Activated CD8-positive, alpha-beta T cell treated with anti-CD3 and anti-CD28 coated beads, Interleukin-2, amount 10 ng/mL, durations not matched to agents 7 days and 5 days (primary cell): ENCODE measurements at regions of chr20 and their contacts with region 1.

Region 1: DNA sequence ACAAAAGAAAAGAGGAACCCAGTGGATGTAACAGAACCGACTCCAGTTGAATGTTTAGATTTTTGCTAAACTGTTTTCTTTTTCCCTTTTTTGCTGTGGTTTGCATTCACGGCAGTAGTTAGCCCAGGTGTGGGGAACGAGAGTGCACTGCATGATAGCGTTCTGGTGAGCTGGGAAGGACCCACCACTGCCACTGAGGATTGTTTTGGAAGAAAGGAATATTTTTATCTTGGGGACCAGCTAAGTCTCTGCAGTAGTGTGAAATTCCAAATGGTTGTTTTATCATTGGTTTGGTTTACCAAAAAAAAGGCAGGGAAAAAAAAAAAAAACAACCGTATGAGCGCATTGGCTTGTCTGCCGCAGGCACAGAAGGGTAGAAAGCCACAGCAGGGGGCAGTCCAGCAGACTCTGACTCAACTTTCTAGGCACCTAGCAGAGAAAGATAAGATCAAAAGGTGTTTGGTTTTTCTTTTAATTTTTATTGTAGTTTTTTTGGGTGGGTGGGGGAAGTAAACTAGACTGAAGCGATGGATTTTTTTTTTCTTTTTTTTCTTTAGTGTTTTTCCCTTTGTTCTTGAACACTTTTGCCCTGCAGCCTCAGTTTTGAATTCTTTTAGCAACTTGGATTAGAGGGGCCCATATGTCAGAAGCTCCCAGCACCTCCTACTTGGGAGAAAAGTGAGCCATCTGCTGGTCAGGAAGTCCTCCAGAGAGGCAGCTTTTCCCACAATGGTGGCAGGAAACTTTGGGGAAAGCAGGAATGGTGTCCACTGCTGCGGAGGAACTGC is 13.5 kb upstream of the RAB5IF start:
- DNase-seq: peak; percentile 74
- ATAC-seq: peak; percentile 69
- H3K4me3 Mint-ChIP-seq: peak overlapping the region; percentile 16
- H3K27ac Mint-ChIP-seq: peak overlapping the region; percentile 87
- H3K4me1 Mint-ChIP-seq: peaks cover 58% of the 10 kb centered on the region
- H3K27me3 Mint-ChIP-seq: no peaks in the 10 kb centered on the region

Region 2: GRCh38 chr20:36527331-36528125 is 64.5 kb before region 1 on chr20:
- CTCF ChIA-PET with region 1: no interaction called
- POLR2A ChIA-PET with region 1: no interaction called
- DNase-seq: no peak
- ATAC-seq: no peak
- H3K4me3 Mint-ChIP-seq: no peak overlapping the region
- H3K27ac Mint-ChIP-seq: no peak overlapping the region
- H3K4me1 Mint-ChIP-seq: no peaks in the 10 kb centered on the region
- H3K27me3 Mint-ChIP-seq: no peaks in the 10 kb centered on the region

Region 3: DNA sequence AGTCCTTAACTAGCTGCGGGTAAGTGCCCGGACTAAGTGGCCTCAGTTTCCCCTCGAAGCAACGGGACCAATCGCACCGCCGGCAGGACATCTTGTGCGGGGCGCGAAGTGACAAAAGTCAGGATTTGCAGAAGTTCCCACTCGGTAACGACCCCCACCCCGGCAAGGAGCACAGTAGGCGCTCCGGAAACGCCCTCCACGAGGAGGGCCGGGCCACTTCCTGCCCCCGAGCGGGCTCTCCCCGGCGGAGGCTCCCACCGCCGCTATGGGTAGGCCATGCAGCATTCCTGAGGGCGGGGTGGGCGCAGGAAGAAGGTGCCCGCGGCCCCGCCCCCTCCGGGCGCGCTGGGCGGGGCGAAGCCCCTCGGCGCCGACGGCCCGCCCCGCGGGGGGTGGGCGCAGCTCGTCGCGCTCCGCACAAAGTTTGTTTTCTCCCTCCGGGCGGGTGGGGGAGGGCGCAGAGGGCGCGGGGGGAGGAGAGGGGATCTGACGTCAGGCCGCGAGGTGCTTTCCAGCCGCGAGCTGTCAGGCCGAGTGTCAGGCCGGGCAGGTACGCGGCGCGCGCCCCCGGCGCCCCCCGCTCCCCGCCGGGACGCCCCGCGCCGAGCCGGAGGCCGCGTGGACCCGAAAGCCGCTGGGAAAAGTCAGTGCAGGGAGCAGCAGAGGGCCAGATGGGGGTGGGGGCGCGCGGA is 18.8 kb before region 1 on chr20 and contains the start of gene TGIF2:
- CTCF ChIA-PET with region 1: interaction called, 10 read pairs
- POLR2A ChIA-PET with region 1: interaction called, 60 read pairs
- DNase-seq: peak; percentile 93
- ATAC-seq: peak; percentile 76
- H3K4me3 Mint-ChIP-seq: peak within 1 kb of the TSS; percentile 87
- H3K27ac Mint-ChIP-seq: peak within 1 kb of the TSS; percentile 98
- H3K4me1 Mint-ChIP-seq: peaks cover 40% of the 10 kb centered on the region
- H3K27me3 Mint-ChIP-seq: no peaks in the 10 kb centered on the region
- total RNA-seq, gene TGIF2: 29.2 to 32.9 TPM

Region 4: DNA sequence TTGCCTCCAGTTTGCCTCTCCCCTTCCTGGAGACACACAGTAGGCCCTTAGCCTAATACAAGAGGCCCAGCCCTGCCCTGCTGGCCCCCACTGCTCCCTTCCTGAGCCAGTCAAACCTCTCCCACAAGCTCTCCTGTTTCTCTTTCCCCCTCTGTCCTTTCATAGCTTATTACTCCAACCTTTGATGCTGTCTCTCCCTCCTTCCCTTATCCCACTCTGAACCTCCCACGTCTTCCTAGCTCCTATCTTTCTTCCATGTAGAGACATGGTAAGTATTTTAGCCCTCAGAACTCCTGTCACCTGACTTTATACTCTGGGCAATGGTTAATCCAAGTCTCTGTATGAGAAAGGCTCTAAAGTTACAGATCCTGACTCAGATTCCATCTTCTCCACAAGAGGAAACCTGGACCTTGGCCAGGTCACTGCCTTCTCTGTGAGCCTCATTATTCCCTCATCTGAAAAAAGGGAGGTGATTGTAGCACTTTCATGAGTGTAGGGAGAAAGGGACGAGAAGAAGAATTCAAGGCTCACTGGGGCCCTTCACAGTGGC is 12.0 kb before region 1 on chr20:
- CTCF ChIA-PET with region 1: interaction called, 11 read pairs
- POLR2A ChIA-PET with region 1: interaction called, 60 read pairs
- DNase-seq: no peak
- ATAC-seq: no peak
- H3K4me3 Mint-ChIP-seq: no peak overlapping the region
- H3K27ac Mint-ChIP-seq: peak overlapping the region; percentile 35
- H3K4me1 Mint-ChIP-seq: peaks cover 45% of the 10 kb centered on the region
- H3K27me3 Mint-ChIP-seq: no peaks in the 10 kb centered on the region

Region 5: DNA sequence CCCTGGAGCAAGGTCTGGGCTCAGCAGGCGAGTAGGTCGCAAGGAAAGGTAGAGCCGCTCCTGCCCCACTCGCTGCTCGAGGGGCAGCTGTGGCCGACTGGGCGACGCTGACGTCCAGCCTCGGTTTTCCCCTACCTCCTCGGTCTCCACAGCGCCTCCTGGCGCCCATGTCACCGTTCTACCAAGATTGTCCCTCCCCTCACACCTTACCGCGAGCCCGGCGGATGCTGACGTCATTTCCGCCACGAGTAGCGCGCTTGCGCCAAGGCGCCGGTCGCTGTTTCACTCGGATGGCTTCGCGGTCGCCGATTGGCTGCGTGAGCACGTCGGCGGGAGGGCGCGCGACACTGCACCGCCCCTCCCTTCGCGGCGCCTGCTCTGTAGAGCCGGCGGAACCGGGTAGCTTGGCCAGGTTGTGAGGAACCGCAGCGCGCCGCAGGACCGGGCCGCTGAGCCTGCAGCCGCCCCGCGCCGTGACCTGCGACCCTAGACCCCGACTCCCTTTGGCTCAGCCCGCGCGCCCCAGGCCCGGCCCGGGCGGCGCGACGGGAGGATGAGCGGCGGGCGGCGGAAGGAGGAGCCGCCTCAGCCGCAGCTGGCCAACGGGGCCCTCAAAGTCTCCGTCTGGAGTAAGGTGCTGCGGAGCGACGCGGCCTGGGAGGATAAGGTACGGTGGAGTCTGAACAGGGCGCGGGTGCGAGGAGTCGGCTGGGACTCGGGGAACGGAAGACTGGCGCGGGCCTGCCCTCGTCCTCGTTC is 13.5 kb after region 1 on chr20 and contains the start of gene RAB5IF:
- CTCF ChIA-PET with region 1: interaction called, 75 read pairs
- POLR2A ChIA-PET with region 1: interaction called, 69 read pairs
- DNase-seq: peak; percentile 100
- ATAC-seq: peak; percentile 95
- H3K4me3 Mint-ChIP-seq: peak within 1 kb of the TSS; percentile 98
- H3K27ac Mint-ChIP-seq: peak within 1 kb of the TSS; percentile 98
- H3K4me1 Mint-ChIP-seq: peaks cover 28% of the 10 kb centered on the region
- H3K27me3 Mint-ChIP-seq: no peaks in the 10 kb centered on the region
- total RNA-seq, gene RAB5IF: 108 to 109 TPM

Region 6: DNA sequence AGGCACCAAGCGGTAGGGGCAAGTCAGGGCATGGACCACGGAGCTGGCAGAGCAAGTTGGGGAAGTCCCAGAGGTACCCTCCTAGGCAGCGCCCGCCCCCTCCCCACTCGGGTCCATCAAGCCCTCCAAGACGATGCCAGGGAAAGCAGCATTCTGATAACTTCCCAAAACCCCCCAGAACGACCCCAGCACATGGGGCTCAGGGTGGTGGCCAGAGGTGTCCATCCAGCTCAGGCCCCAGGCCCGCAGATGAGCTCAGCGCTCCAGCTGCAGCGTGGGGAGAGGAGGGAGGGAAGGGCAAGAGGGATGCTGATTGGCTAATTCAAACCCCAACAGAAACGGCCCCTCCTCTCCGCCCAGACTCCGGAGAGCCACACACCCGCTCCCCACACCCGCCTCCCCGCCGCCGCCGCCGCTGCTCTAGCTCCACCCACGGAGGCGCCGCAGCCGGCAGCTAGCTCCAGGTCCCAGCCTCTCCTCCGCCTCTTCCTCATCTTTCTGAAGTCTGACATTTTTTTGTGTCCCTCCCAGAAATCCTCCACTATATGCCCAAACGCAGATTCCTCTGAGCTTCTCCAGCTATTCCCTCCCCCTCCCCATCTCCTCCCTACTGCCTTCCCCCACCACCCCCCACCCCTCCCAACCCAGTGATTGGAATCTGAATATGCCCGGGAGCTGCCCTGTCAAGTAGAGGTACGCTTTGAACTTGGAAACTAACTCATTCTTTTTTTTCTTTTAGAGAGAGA is 243.6 kb after region 1 on chr20:
- CTCF ChIA-PET with region 1: interaction called, 10 read pairs
- POLR2A ChIA-PET with region 1: no interaction called
- DNase-seq: peak; percentile 94
- ATAC-seq: peak; percentile 97
- H3K4me3 Mint-ChIP-seq: peak overlapping the region; percentile 84
- H3K27ac Mint-ChIP-seq: peak overlapping the region; percentile 91
- H3K4me1 Mint-ChIP-seq: peaks cover 39% of the 10 kb centered on the region
- H3K27me3 Mint-ChIP-seq: no peaks in the 10 kb centered on the region